SK-N-SH (cell line): ENCODE measurements at regions of chr7 and their contacts with region 1.

Region 1: DNA sequence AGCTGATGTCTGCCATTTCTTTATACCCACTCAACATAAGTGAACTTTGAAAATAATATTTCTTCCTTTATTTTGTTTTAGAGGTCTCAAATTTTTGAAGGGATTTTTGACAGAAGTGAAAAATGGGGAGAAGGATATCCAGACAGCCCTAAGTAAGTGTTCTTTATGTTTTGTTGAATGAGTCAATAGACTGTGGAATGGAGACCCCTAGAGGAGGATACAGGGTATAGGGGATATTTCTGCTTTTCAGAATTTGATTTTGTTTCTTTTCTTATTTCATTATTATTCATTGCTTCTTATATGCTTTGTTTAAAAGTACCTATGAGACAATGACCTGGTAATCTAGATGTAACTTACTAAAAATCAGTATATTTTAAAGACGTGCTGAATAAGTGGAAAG is 34.4 kb downstream of the PLEKHA8 start:
- DNase-seq: peak; percentile 66
- H3K4me3 ChIP-seq: no peak overlapping the region
- H3K27ac ChIP-seq: no peak overlapping the region
- H3K4me1 ChIP-seq: no peaks in the 10 kb centered on the region
- H3K27me3 ChIP-seq: no peaks in the 10 kb centered on the region
- CTCF ChIP-seq: peak; percentile 96
- EP300 ChIP-seq: no peak
- RAD21 ChIP-seq: peak; percentile 86

Region 2: GRCh38 chr7:29748286-29749108 is 314.1 kb before region 1 on chr7:
- CTCF ChIA-PET with region 1: interaction called, 10 read pairs
- POLR2A ChIA-PET with region 1: no interaction called
- DNase-seq: peak; percentile 24
- H3K4me3 ChIP-seq: no peak overlapping the region; a peak in 1 of 4 replicates
- H3K27ac ChIP-seq: no peak overlapping the region
- H3K4me1 ChIP-seq: no peaks in the 10 kb centered on the region
- H3K27me3 ChIP-seq: 0 out of 2 replicates have a peak, but pooled peaks cover 3% of the 10 kb centered on the region
- CTCF ChIP-seq: peak; percentile 83
- EP300 ChIP-seq: no peak
- RAD21 ChIP-seq: peak; percentile 82

Region 3: DNA sequence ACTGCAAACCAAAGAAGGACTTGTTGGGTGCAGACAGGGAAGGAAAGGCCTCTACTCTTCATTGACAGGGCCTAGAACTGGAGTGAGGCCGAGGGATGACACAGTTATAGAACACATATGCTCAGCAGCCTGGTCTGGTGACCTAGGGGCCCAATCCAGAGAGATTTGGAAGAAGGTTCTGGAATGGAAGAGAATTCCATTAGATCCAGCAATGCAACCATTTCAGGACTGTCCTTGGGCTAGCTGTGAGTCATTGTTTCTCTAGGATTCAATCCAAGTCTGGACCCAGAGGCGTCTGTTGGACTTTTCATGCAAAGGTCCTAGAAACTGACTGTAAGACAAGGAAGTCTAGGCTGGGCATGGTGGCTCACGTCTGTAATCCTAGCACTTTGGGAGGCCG is 197.1 kb before region 1 on chr7:
- CTCF ChIA-PET with region 1: no interaction called
- POLR2A ChIA-PET with region 1: no interaction called
- DNase-seq: no peak
- H3K4me3 ChIP-seq: no peak overlapping the region
- H3K27ac ChIP-seq: 0 out of 4 replicates have a peak overlapping the region, but pooled peaks of 1 of the 2 experiments have one; percentile 11
- H3K4me1 ChIP-seq: peaks cover 13 to 16% of the 10 kb centered on the region in 2 experiments; a peak in 3 of 4 replicates
- H3K27me3 ChIP-seq: no peaks in the 10 kb centered on the region
- CTCF ChIP-seq: no peak
- EP300 ChIP-seq: no peak
- RAD21 ChIP-seq: no peak

Region 4: GRCh38 chr7:29976673-29977415 is 85.7 kb before region 1 on chr7:
- CTCF ChIA-PET with region 1: interaction called, 10 read pairs
- POLR2A ChIA-PET with region 1: no interaction called
- DNase-seq: no peak
- H3K4me3 ChIP-seq: no peak overlapping the region
- H3K27ac ChIP-seq: no peak overlapping the region
- H3K4me1 ChIP-seq: peaks cover 0 to 12% of the 10 kb centered on the region in 2 experiments; a peak in 2 of 4 replicates
- H3K27me3 ChIP-seq: no peaks in the 10 kb centered on the region
- CTCF ChIP-seq: no peak
- EP300 ChIP-seq: no peak
- RAD21 ChIP-seq: no peak

Region 5: DNA sequence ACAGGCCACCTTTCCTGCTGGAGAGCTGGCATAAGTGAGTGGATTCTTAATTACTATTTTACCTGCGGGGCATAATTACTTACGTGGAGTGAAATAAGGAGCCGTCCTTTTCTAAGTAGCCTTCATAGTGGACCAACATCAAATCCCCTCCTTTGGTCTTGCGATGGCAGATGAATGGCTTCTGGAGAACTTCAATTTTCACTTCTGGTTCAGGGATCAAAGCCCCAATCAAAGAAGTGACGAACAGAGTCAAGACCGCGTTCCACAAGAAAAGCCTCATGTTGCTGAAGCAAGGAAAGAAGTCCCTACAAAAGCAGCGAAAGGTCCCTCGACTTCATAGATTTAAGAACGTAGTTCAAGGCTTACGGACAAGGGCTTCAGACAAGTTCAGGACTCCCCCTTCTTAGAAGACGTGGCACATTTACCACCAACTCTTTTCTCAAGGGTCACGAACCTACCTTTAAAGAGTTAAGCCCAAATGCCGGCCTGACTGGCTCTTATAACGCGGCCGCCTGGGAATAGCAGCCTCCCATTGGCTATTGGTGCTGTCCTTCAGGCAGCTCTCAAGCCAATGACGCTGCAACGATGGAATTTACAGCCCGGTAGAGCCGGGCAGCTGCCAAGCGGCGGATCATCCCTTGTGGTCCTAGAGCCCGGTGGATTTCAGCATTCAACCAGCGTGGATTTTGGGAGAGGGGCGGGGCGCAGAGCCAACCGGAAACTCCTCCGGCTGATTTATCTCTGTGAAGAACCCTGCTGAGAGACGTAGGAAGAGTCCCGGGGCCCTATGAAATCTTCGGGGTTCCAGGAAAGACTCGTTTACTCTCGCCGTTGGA is 36.1 kb before region 1 on chr7 and contains the start of gene FKBP14:
- CTCF ChIA-PET with region 1: interaction called, 85 read pairs
- POLR2A ChIA-PET with region 1: no interaction called
- DNase-seq: peak; percentile 95
- H3K4me3 ChIP-seq: peak within 1 kb of the TSS; percentile 75 to 99
- H3K27ac ChIP-seq: peak within 1 kb of the TSS; percentile 79 to 96
- H3K4me1 ChIP-seq: peaks cover 8 to 34% of the 10 kb centered on the region in 2 experiments
- H3K27me3 ChIP-seq: no peaks in the 10 kb centered on the region
- CTCF ChIP-seq: no peak
- EP300 ChIP-seq: peak in 1 of 2 experiments; percentile 34; a peak in 1 of 4 replicates
- RAD21 ChIP-seq: 0 out of 2 replicates have a peak, but pooled peaks have one; percentile 2
- polyA plus RNA-seq, gene FKBP14: 15.7 and 24.4 TPM in 2 replicates

Region 6: DNA sequence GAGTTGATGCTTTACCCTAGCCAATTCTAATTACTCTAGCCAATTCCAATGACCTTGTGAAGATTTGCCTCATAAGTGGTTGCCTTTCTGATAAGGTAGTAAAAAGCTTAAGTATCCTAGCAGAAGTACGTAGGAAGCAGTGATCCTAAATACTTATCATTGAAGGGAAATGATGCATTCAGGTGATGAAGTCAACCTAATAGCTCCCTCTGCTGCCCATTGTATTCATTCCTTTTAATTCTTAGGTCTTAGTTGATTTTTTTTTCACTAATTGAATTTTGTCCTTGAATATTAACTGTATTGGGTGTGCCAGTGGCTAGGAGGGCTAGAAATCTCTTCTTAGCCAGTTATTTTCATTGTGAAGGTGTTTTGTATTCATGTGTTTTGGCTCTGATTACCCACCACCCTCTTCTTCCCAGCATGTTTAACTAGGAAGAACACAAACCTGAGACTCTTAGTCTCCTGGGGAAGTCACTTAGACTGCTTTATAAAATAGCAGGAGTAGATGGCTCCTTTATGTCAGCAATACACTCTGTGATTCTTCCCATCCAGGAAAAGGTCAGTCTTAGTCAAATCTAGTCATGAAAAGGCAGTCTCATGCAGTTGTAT is 11.9 kb after region 1 on chr7:
- CTCF ChIA-PET with region 1: interaction called, 155 read pairs
- POLR2A ChIA-PET with region 1: no interaction called
- DNase-seq: peak; percentile 32
- H3K4me3 ChIP-seq: no peak overlapping the region
- H3K27ac ChIP-seq: no peak overlapping the region
- H3K4me1 ChIP-seq: no peaks in the 10 kb centered on the region
- H3K27me3 ChIP-seq: no peaks in the 10 kb centered on the region
- CTCF ChIP-seq: peak; percentile 75
- EP300 ChIP-seq: no peak
- RAD21 ChIP-seq: peak; percentile 64

Region 7: DNA sequence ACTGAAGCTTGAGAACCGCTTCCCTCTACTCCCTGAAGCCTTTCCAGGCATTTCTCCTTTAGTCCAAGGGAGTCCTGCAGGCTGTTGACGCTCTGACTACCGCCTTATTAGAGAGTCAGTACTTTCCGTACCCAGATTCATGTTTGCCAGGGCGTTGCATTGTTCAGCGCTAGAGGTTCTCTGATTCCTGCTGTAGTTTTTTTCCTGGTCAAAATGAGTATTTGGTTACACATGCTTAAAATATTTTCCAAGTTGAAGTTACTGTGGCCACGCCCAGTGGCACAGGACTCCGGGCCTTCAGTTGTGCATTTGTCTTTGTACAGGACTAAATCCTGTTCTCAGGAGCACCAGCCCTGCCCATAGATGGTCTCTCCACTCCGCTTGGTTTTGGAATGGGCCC is 80.1 kb after region 1 on chr7:
- CTCF ChIA-PET with region 1: no interaction called
- POLR2A ChIA-PET with region 1: no interaction called
- DNase-seq: no peak
- H3K4me3 ChIP-seq: no peak overlapping the region
- H3K27ac ChIP-seq: peak overlapping the region; percentile 23 to 39; a peak in 3 of 4 replicates
- H3K4me1 ChIP-seq: peaks cover 7 to 31% of the 10 kb centered on the region in 2 experiments
- H3K27me3 ChIP-seq: no peaks in the 10 kb centered on the region
- CTCF ChIP-seq: no peak
- EP300 ChIP-seq: no peak
- RAD21 ChIP-seq: no peak

Region 8: DNA sequence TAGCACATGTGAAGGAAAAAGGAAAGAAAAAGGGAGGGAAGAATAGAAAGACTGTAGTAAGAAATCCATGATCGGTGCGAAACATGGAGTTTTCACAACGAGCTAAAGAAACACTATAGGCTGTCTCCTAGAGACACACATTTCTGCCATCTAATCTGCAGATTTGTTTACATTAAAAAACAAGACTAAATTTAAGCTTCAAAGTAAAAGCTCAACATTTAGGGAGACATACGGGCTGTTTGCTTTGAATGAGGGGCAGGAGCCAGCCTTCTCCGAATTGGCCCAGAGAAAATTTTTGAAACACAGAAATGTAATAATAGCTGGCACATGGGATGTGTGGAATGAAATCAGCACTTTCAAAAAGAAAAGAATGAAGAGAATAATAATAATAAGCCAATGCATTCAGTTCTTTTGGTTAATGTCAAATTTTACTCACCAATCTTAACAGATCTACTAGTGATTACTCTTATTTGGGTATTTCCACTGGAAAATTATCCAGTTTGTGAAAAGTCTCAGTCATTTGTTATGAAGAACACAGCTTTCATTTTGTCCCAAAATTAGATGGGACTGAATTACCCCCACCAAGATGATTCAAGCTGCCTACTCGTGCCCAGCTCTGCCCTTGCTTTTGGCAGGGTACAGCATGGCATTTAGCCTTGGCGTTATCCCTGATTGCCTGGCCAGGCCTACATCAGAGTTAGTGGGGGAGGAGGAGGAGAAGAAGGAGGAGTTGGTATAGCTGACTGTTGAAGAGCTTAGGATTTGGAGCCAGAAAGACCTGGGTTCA is 119.3 kb after region 1 on chr7:
- CTCF ChIA-PET with region 1: no interaction called
- POLR2A ChIA-PET with region 1: no interaction called
- DNase-seq: no peak
- H3K4me3 ChIP-seq: no peak overlapping the region
- H3K27ac ChIP-seq: no peak overlapping the region
- H3K4me1 ChIP-seq: no peaks in the 10 kb centered on the region
- H3K27me3 ChIP-seq: no peaks in the 10 kb centered on the region
- CTCF ChIP-seq: no peak
- EP300 ChIP-seq: no peak
- RAD21 ChIP-seq: no peak